ENCODE measurements at regions of chr19 and their contacts with region 1.

Region 1: GRCh38 chr19:41837981-41838708 is 6.3 kb downstream of the LYPD4 start:
- DNase-seq: no peak
- H3K4me3 Mint-ChIP-seq: no peak overlapping the region
- H3K27ac Mint-ChIP-seq: no peak overlapping the region
- H3K4me1 Mint-ChIP-seq: no peaks in the 10 kb centered on the region
- H3K27me3 Mint-ChIP-seq: peaks cover 23% of the 10 kb centered on the region

Region 2: GRCh38 chr19:41821003-41821735 is 17.0 kb before region 1 on chr19:
- CTCF ChIA-PET with region 1: interaction called, 17 read pairs
- POLR2A ChIA-PET with region 1: no interaction called
- intact Hi-C with region 1: no loop called
- DNase-seq: peak; percentile 53
- H3K4me3 Mint-ChIP-seq: no peak overlapping the region
- H3K27ac Mint-ChIP-seq: no peak overlapping the region
- H3K4me1 Mint-ChIP-seq: no peaks in the 10 kb centered on the region
- H3K27me3 Mint-ChIP-seq: peaks cover 15% of the 10 kb centered on the region

Region 3: GRCh38 chr19:41849067-41849466 is 10.9 kb after region 1 on chr19:
- CTCF ChIA-PET with region 1: interaction called, 13 read pairs
- POLR2A ChIA-PET with region 1: no interaction called
- intact Hi-C with region 1: no loop called
- DNase-seq: no peak
- H3K4me3 Mint-ChIP-seq: no peak overlapping the region
- H3K27ac Mint-ChIP-seq: no peak overlapping the region
- H3K4me1 Mint-ChIP-seq: no peaks in the 10 kb centered on the region
- H3K27me3 Mint-ChIP-seq: peaks cover 5% of the 10 kb centered on the region

Region 4: DNA sequence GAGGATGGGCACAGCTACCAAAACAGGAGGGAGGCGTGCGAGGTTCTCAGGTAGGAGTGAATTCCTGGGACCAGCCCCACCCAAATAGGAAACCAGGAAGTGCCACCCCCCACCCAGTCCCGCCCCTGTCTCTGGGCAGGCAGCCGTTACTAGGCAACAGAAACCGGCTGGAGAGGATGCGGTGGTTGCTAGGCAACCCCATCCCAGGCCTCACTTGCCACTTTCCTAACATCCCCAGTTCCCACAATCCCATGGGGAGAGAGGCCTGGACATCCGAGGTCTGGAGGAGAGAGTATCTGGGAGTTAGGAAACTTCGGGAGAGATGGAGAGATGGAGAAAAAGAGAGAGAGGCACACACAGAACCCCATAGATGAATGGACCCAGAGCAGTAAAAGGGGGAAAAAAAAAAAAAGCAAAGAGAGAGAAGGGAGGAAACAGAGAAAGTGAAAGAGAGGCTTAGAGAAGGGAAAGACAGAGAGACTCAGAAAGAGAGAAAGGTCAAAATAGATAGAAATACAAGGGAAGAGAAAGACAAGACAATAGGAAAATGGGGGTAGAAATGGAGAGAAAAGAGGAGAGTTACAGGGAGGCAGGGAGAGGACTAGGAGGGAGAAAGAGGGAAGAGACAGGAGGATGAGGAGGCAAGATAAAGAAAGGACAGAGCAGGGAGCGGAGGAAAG is 228.1 kb after region 1 on chr19:
- CTCF ChIA-PET with region 1: no interaction called
- POLR2A ChIA-PET with region 1: no interaction called
- intact Hi-C with region 1: no loop called
- DNase-seq: no peak
- H3K4me3 Mint-ChIP-seq: no peak overlapping the region
- H3K27ac Mint-ChIP-seq: no peak overlapping the region
- H3K4me1 Mint-ChIP-seq: no peaks in the 10 kb centered on the region
- H3K27me3 Mint-ChIP-seq: peaks cover 4% of the 10 kb centered on the region

Measured in activated CD4-positive, alpha-beta memory T cell treated with anti-CD3 and anti-CD28 coated beads for 36 hours (primary cell).